ENCODE measurements at regions of chr7 and their contacts with region 1.

Region 1: DNA sequence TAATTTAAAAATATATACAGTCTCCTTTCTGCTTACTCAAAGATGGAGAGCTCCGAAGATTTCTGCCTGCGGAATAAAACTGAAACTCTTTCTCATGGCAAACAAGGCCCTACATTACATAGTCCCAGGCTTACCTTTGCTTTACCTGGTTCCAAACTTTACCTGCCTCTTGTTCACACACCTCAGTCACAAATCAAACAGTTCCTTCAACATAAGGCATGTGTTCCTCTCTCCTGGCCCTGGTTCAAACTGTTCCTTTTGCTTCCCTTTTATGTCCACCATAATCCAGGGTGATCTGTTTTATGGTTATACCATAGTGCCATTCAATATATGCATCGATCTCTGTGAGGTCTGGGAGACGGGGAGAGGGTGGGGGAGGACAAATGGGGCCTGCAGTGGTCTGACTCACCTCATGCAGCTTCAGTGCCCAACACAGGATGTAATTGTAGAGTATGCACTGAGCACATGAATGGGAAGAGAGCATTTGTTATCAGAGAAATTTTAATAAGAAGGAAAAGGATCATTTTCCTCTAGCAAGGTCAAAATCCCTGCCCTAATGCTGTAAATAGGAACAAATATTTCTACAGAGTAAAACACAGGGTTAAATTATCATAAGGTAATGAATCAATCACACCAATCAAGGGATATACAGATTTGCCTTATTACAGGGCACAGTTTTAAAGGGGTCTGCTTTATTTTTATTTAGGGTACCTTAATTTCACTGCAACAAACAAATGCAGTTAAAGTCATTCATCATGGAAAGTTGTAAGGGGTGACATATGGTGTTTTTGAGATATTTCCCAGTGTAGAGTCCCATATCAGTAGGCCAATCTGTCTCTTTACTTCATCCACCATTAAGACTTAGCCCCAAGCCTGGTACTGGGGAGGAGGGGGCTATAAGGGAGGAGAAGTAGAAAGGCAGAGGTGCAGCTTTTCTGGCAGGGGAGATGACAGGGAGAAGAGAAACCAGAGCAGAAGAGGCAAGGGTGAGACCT is 88.8 kb upstream of the PDE1C start:
- DNase-seq: no peak
- ATAC-seq: no peak
- H3K4me3 ChIP-seq: no peak overlapping the region
- H3K4me3 Mint-ChIP-seq: no peak overlapping the region
- H3K27ac ChIP-seq: no peak overlapping the region
- H3K27ac Mint-ChIP-seq: no peak overlapping the region
- H3K4me1 ChIP-seq: no peaks in the 10 kb centered on the region
- H3K4me1 Mint-ChIP-seq: no peaks in the 10 kb centered on the region
- H3K27me3 ChIP-seq: no peaks in the 10 kb centered on the region
- H3K27me3 Mint-ChIP-seq: peaks cover 0 to 9% of the 10 kb centered on the region in 2 donors

Region 2: GRCh38 chr7:32147546-32148268 is 11.3 kb before region 1 on chr7:
- CTCF ChIA-PET with region 1: no interaction called
- POLR2A ChIA-PET with region 1: interaction called in 1 of 2 experiments, 12 read pairs
- DNase-seq: no peak
- ATAC-seq: no peak
- H3K4me3 ChIP-seq: no peak overlapping the region
- H3K4me3 Mint-ChIP-seq: no peak overlapping the region
- H3K27ac ChIP-seq: no peak overlapping the region
- H3K27ac Mint-ChIP-seq: no peak overlapping the region
- H3K4me1 ChIP-seq: no peaks in the 10 kb centered on the region
- H3K4me1 Mint-ChIP-seq: no peaks in the 10 kb centered on the region
- H3K27me3 ChIP-seq: no peaks in the 10 kb centered on the region
- H3K27me3 Mint-ChIP-seq: no peaks in the 10 kb centered on the region